ENCODE measurements at regions of chr16 and their contacts with region 1.

Region 1: DNA sequence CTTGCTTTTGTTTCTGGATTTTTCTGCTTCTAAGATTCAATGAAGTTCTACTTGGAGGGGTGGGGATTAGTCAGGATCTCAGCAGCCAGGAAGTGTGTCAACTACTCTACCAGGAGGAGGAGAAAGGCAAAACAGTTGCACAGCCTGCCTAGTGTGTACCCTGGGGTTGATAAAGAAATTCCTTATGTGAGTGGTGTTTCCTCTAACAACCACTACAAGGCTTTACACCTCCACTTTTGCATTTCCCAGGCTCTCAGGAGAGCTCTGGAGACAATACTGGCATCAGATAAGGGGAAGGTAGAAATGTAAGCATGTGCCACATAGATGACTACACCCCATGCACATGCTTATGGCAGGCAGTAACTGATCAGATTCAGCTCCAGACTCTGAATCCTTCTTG is 174.6 kb downstream of the TOX3 start:
- DNase-seq: no peak

Region 2: GRCh38 chr16:52301026-52301425 is 71.3 kb before region 1 on chr16:
- intact Hi-C with region 1: no loop called
- DNase-seq: no peak

Region 3: DNA sequence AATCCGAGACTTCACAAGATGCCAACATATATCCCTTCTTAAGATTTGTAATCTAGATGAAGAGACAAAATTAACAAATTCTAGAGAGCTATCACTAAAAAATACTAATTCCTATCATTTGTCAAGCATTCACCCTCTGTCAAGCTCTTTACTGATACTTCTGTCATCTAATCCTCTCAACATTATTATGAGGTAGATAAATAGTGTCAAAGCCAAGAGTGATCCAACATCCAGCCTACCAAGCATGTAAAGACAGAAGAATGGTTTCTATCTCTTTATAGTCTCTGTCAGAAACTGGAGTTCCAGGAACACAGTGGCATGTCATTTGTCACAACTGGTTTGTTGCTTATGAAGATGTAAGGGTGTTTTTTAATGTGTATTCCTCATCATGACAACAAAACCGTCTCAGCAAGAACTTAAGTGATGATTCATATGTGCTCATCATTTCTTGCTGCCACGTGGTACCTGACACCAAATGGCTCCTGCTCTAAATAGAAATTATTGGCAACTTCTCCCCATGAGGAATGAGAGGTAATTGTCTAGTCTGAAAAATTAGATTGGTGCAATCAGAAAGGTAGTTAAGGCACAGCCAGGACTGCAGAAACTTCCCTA is 22.2 kb before region 1 on chr16:
- intact Hi-C with region 1: no loop called
- DNase-seq: no peak

Region 4: DNA sequence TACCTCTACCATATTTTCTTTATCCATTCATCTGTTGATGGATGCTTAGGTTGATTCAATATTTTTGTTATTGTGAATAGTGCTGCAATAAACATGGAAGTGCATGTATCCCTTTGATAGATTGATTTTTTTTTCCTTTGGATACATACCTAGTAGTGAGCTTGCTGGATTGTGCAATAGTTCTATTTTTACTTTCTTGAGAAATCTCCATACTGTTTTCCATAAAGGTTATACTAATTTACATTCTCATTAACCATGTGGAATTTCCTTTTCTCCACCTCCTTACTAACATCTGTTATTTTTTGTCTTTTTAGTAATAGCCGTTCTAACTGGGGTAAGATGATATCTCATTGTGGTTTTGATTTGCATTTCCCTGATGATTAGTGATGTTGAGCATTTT is 299.3 kb after region 1 on chr16:
- intact Hi-C with region 1: loop called in 1 of 2 experiments (anchors 10 kb)
- DNase-seq: no peak

Region 5: DNA sequence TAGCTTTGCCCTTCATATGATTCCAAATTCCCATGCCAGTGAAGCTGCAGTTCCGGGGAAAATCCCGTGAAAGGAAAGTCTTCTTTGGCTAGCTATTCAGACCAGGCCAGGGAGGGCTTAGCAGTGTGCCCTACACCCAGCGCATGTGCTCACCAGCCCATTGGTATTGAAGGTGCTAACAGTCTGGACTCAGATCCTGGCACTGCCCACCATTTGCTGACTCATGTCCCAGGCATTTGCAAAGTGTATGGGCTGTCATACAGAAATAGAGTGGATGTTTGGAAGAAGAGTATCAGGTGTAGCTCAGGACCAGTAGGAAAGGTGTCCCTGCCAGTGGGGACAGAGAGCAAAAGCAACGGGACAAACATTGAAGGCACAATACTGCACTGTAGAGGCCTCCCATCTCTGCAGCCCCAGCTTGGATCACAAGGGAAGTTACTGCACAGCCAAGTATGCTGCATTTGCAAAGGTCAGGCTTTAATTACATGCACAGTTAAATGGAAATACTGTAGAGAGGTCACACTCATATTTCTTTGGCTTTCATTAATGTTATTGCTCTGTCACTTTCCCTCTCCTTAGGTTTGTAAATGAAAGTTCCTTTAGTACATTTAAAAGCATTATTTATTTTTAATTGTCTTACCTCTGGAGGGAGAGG is 1694.3 kb after region 1 on chr16:
- intact Hi-C with region 1: no loop called
- DNase-seq: no peak